ENCODE measurements at regions of chr7 and their contacts with region 1.

Region 1: GRCh38 chr7:99137411-99138180 is 6.3 kb downstream of the SMURF1 start:
- H3K4me3 Mint-ChIP-seq: no peak overlapping the region
- H3K27ac Mint-ChIP-seq: no peak overlapping the region
- H3K4me1 Mint-ChIP-seq: peaks cover 52% of the 10 kb centered on the region
- H3K27me3 Mint-ChIP-seq: no peaks in the 10 kb centered on the region

Region 2: GRCh38 chr7:99083068-99083651 is 54.4 kb before region 1 on chr7:
- intact Hi-C with region 1: loop called (anchors 10 kb)
- H3K4me3 Mint-ChIP-seq: no peak overlapping the region
- H3K27ac Mint-ChIP-seq: no peak overlapping the region
- H3K4me1 Mint-ChIP-seq: peaks cover 57% of the 10 kb centered on the region
- H3K27me3 Mint-ChIP-seq: no peaks in the 10 kb centered on the region

Region 3: DNA sequence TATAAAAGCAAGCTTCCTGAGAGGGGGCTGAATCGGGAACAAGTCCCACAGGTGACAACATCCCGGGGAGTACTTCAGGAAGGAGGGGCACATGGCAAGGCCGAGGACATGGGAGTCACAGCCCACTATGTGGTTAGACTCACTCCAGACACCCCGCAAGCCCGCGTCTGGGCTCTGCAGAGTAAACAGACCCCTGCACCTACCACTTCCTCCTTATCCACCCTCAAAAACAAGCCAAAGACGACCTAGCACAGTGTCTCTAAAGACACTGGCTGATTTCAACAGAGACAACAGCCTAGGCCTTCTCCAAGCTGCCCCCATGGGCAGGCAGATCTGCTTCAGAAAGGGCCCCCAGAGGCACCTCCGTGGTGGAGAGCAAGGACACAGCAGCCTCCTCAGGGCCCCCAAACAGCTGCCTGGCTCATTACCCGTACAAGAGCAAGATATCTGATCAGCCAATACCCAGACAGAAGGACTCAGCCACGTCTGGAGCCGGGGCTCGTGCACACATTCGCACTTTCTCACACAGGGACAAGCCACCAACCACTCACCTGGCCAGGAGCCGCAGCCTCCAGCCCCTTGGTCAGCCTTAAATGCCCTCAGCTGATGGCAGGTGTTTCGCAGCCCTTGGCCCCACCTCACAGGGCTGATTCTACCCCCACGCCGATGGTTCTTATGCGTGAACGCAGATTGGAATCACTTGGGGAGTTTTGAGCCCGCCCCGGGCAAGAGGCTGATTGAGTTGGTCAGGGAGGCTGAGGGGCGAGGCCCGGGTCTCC is 81.0 kb after region 1 on chr7:
- intact Hi-C with region 1: no loop called
- H3K4me3 Mint-ChIP-seq: no peak overlapping the region
- H3K27ac Mint-ChIP-seq: no peak overlapping the region
- H3K4me1 Mint-ChIP-seq: no peaks in the 10 kb centered on the region
- H3K27me3 Mint-ChIP-seq: peaks cover 8% of the 10 kb centered on the region

Region 4: DNA sequence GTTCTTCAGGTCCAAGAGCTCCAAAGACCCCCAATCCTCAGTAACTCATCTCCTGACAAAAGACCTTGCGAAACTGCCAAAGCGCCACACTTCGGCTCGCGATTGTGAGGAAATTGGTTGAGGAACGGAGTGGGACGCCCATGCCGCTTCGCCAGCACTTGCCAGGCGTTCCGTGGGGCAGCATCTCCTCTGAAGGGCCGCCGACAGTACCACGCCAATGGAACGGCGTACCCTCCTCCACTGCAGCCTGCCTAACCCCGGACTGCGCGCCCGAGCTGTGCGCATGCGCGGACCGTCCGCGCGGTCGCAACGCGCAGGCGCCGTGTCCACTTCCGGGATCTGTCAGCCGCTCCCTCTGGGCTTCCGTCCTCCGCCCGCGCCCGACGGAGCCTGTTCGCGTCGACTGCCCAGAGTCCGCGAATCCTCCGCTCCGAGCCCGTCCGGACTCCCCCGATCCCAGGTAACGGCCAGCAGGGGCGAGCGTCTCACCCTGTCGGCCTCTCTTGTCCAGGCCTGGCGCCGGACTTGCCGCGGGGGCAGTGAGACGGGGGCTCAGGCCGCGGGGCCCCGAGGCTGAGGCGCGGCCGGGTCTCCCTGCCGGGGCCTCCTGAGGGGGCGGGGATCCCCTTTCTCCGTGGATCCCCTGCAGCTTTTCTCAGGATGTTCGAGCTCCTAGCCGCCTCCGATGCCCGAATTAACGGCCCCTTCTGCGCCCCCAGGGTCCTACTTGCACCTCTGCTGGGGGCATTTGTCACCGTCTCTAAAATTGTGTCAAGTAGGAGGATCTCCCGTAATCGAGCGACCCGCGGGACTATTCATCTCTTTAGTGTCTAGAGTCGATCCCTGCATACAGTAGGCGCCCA is 188.2 kb after region 1 on chr7 and contains the start of gene ARPC1A:
- intact Hi-C with region 1: loop called (anchors 5 kb)
- H3K4me3 Mint-ChIP-seq: peak within 1 kb of the TSS; percentile 72
- H3K27ac Mint-ChIP-seq: peak within 1 kb of the TSS; percentile 91
- H3K4me1 Mint-ChIP-seq: peaks cover 49% of the 10 kb centered on the region
- H3K27me3 Mint-ChIP-seq: no peaks in the 10 kb centered on the region

Measured in dendritic cell treated with granulocyte-macrophage colony-stimulating factor and Interleukin-4, amounts not matched to agents 40 ng/mL and 50 ng/mL, for 4 days (primary cell).